CD4-positive, alpha-beta T cell (primary cell): ENCODE measurements at regions of chr14 and their contacts with region 1.

Region 1: GRCh38 chr14:22766456-22767322 is at the start of gene OXA1L:
- DNase-seq: peak; percentile 86 to 99 (median 96)
- ATAC-seq: peak; percentile 94
- H3K4me3 ChIP-seq: peak within 1 kb of the TSS; percentile 87
- H3K4me3 Mint-ChIP-seq: peak within 1 kb of the TSS; percentile 85
- H3K27ac ChIP-seq: peak within 1 kb of the TSS; percentile 80
- H3K27ac Mint-ChIP-seq: peak within 1 kb of the TSS; percentile 88
- H3K4me1 ChIP-seq: peaks cover 23% of the 10 kb centered on the region
- H3K4me1 Mint-ChIP-seq: peaks cover 33% of the 10 kb centered on the region
- H3K27me3 ChIP-seq: no peaks in the 10 kb centered on the region
- H3K27me3 Mint-ChIP-seq: no peaks in the 10 kb centered on the region
- CTCF ChIP-seq: no peak
- total RNA-seq, gene OXA1L: 176 to 177 TPM

Region 2: DNA sequence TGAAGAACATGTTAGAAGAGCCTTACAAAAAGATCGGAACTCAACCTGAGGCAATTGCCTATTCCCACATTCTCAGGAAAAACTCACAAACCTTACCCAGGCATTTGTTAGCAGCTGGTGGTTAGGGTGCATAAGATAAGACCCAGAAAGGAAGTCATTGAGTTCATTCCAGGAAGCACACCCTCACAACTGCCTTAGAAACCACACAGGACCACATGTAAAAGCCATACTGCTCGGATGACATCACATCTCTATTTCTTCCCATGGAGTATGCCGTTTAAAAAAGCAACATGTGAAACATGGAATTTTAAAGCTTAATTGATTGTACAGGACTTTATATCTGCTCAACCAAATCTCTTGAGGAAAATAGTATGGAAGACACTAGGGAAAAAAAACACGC is 588.8 kb before region 1 on chr14:
- CTCF ChIA-PET with region 1: no interaction called
- POLR2A ChIA-PET with region 1: no interaction called
- intact Hi-C with region 1: no loop called
- DNase-seq: peak in 4 of 14 experiments; percentile 3 to 52 (median 38)
- ATAC-seq: peak; percentile 86
- H3K4me3 ChIP-seq: no peak overlapping the region
- H3K4me3 Mint-ChIP-seq: peak overlapping the region; percentile 76
- H3K27ac ChIP-seq: no peak overlapping the region
- H3K27ac Mint-ChIP-seq: peak overlapping the region; percentile 73
- H3K4me1 ChIP-seq: peaks cover 3% of the 10 kb centered on the region
- H3K4me1 Mint-ChIP-seq: peaks cover 19% of the 10 kb centered on the region
- H3K27me3 ChIP-seq: no peaks in the 10 kb centered on the region
- H3K27me3 Mint-ChIP-seq: no peaks in the 10 kb centered on the region
- CTCF ChIP-seq: no peak

Region 3: DNA sequence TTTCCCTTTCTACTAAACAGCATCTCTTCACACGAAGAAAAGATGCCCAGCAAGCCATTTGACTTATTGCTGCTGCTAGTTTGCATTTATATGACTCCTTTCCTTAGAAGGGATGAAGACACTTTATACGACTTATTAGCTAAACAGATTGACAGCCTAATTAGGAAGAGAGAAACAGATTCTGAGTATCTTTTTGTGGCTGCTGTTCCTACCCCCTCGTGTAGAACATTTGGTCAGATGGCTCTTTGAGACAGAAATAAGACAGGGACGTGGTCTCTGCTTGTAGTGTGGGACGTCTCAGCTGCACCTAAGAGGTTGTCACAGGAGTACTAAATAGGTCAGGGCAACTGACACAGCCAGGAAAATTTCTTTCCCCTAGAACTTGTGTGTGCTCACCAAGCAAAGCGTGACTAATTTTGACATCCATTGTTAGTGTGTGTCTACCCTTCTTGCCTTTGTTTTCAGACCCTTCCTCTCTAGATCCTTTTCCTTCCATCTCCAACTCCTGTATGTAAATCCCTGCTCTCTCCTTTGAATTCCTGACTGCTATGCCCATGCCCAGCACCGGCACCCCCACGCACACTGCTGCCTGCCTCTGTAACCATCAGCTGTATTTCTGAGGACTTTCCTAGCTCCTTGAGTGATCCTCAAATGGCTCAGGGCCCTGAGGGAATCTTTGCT is 260.9 kb before region 1 on chr14:
- CTCF ChIA-PET with region 1: no interaction called
- POLR2A ChIA-PET with region 1: no interaction called
- intact Hi-C with region 1: no loop called
- DNase-seq: peak in 5 of 14 experiments; percentile 26 to 65 (median 56)
- ATAC-seq: peak; percentile 36
- H3K4me3 ChIP-seq: peak overlapping the region; percentile 61
- H3K4me3 Mint-ChIP-seq: peak overlapping the region; percentile 77
- H3K27ac ChIP-seq: peak overlapping the region; percentile 77 to 99
- H3K27ac Mint-ChIP-seq: peak overlapping the region; percentile 93
- H3K4me1 ChIP-seq: peaks cover 45% of the 10 kb centered on the region
- H3K4me1 Mint-ChIP-seq: peaks cover 79% of the 10 kb centered on the region
- H3K27me3 ChIP-seq: no peaks in the 10 kb centered on the region
- H3K27me3 Mint-ChIP-seq: no peaks in the 10 kb centered on the region
- CTCF ChIP-seq: no peak

Region 4: GRCh38 chr14:22589096-22589839 is 177.4 kb before region 1 on chr14 and contains the start of gene DAD1:
- CTCF ChIA-PET with region 1: interaction called, 4 read pairs
- POLR2A ChIA-PET with region 1: interaction called, 34 read pairs
- intact Hi-C with region 1: loop called (anchors 1 to 5 kb)
- DNase-seq: peak; percentile 98 to 100 (median 100)
- ATAC-seq: peak; percentile 87
- H3K4me3 ChIP-seq: peak within 1 kb of the TSS; percentile 82
- H3K4me3 Mint-ChIP-seq: peak within 1 kb of the TSS; percentile 96
- H3K27ac ChIP-seq: peak within 1 kb of the TSS; percentile 92 to 96
- H3K27ac Mint-ChIP-seq: peak within 1 kb of the TSS; percentile 98
- H3K4me1 ChIP-seq: peaks cover 39% of the 10 kb centered on the region
- H3K4me1 Mint-ChIP-seq: peaks cover 60% of the 10 kb centered on the region
- H3K27me3 ChIP-seq: no peaks in the 10 kb centered on the region
- H3K27me3 Mint-ChIP-seq: no peaks in the 10 kb centered on the region
- CTCF ChIP-seq: no peak
- total RNA-seq, gene DAD1: 41.8 to 44.1 TPM

Region 5: DNA sequence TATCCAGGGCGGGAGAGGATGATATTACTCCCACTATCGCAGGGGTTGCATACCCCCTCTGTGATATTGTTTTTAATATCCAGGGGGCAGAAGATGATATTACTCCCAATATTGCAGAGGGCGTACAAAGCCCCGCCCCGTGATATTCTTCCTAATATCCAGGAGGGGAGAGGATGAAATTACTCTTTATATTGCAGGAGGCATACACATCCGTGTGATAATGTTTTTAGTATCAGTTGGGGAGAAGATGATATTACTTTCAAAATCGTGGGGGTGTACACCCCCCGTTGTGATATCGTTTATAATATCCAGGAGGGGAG is 53.1 kb before region 1 on chr14:
- CTCF ChIA-PET with region 1: no interaction called
- POLR2A ChIA-PET with region 1: interaction called, 4 read pairs
- intact Hi-C with region 1: loop called (anchors 1 to 5 kb)
- DNase-seq: no peak
- ATAC-seq: no peak
- H3K4me3 ChIP-seq: peak overlapping the region; percentile 45
- H3K4me3 Mint-ChIP-seq: peak overlapping the region; percentile 81
- H3K27ac ChIP-seq: no peak overlapping the region
- H3K27ac Mint-ChIP-seq: no peak overlapping the region
- H3K4me1 ChIP-seq: peaks cover 7% of the 10 kb centered on the region
- H3K4me1 Mint-ChIP-seq: peaks cover 15% of the 10 kb centered on the region
- H3K27me3 ChIP-seq: peaks cover 23 to 30% of the 10 kb centered on the region in 2 experiments
- H3K27me3 Mint-ChIP-seq: peaks cover 51% of the 10 kb centered on the region
- CTCF ChIP-seq: no peak

Region 6: GRCh38 chr14:22737052-22737451 is 29.6 kb before region 1 on chr14:
- CTCF ChIA-PET with region 1: no interaction called
- POLR2A ChIA-PET with region 1: no interaction called
- intact Hi-C with region 1: no loop called
- DNase-seq: no peak
- ATAC-seq: no peak
- H3K4me3 ChIP-seq: no peak overlapping the region
- H3K4me3 Mint-ChIP-seq: no peak overlapping the region
- H3K27ac ChIP-seq: no peak overlapping the region
- H3K27ac Mint-ChIP-seq: no peak overlapping the region
- H3K4me1 ChIP-seq: no peaks in the 10 kb centered on the region
- H3K4me1 Mint-ChIP-seq: peaks cover 4% of the 10 kb centered on the region
- H3K27me3 ChIP-seq: peaks cover 0 to 2% of the 10 kb centered on the region in 2 experiments
- H3K27me3 Mint-ChIP-seq: no peaks in the 10 kb centered on the region
- CTCF ChIP-seq: no peak

Region 7: GRCh38 chr14:22918804-22919600 is 152.3 kb after region 1 on chr14 and contains the start of gene RBM23:
- CTCF ChIA-PET with region 1: no interaction called
- POLR2A ChIA-PET with region 1: interaction called, 18 read pairs
- intact Hi-C with region 1: loop called in 1 of 2 experiments (anchors 5 kb)
- DNase-seq: peak; percentile 99 to 100 (median 100)
- ATAC-seq: peak; percentile 84
- H3K4me3 ChIP-seq: peak within 1 kb of the TSS; percentile 74
- H3K4me3 Mint-ChIP-seq: peak within 1 kb of the TSS; percentile 88
- H3K27ac ChIP-seq: peak within 1 kb of the TSS; percentile 99 to 100
- H3K27ac Mint-ChIP-seq: peak within 1 kb of the TSS; percentile 100
- H3K4me1 ChIP-seq: peaks cover 38% of the 10 kb centered on the region
- H3K4me1 Mint-ChIP-seq: peaks cover 50% of the 10 kb centered on the region
- H3K27me3 ChIP-seq: no peaks in the 10 kb centered on the region
- H3K27me3 Mint-ChIP-seq: peaks cover 4% of the 10 kb centered on the region
- CTCF ChIP-seq: no peak
- total RNA-seq, gene RBM23: 87.9 to 111 TPM